ENCODE measurements at regions of chr1 and their contacts with region 1.

Region 1: DNA sequence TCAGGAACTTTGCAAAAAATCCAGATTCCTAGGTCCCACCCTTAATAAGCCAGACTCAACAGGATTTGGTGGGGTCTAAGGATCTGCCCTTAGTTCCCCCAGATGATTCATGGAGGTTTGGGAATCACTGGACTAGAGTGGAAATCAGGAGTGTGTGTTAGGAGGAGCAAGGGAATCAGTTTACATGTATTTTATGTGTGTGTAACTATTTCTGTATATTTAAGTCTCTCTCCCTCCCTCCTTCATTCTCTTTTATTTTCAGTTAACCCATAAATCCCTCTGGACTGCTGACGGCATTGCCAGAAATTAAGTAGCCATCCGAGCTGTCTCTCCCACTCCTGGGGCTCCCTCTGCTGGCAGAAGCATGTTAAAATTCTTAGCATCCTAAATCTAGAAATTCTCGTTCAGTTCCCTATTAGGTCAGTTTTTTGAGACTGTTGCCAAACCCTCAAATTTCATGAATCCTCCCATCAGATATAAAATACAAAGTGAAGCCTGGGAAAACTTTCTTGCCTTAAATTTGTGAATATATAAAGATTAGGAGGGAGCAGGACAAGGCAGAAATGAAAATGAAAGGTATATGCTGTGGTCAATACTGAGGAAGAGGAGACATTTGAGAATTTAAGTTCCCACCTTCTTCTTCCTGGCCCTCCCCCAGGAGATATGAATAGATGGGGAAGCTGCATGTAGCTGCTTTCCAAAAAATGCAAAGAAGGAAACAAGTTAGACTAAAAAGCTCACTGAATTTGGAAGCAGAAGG is 11.7 kb upstream of the HSD11B1 start:
- DNase-seq: peak; percentile 97
- ATAC-seq: peak; percentile 81
- H3K4me3 ChIP-seq: no peak overlapping the region
- H3K27ac ChIP-seq: peak overlapping the region; percentile 34
- H3K4me1 ChIP-seq: peaks cover 38% of the 10 kb centered on the region
- H3K27me3 ChIP-seq: no peaks in the 10 kb centered on the region
- CTCF ChIP-seq: peak; percentile 99

Region 2: DNA sequence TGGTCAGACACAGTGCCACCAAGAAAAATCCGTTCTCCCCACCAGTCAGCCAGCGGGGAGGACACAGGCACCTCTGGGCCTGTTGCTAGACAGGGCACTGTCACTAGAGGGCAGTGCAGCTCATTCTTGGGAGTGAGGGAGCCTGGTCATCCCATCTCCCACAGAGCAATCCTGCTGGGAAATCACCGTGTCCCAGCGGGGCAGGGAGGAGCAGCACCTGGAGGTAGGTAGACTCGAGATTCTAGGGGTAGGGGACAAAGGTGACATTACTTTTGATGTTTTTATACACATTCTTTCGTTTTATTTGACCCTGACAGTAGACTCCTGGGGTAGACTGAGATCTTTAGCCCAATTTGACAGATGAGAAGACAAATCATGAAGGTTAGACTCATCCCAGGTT is 116.1 kb before region 1 on chr1:
- CTCF ChIA-PET with region 1: no interaction called
- POLR2A ChIA-PET with region 1: no interaction called
- intact Hi-C with region 1: loop called (anchors 1 kb)
- DNase-seq: peak; percentile 98
- ATAC-seq: peak; percentile 99
- H3K4me3 ChIP-seq: no peak overlapping the region
- H3K27ac ChIP-seq: no peak overlapping the region
- H3K4me1 ChIP-seq: peaks cover 12% of the 10 kb centered on the region
- H3K27me3 ChIP-seq: no peaks in the 10 kb centered on the region
- CTCF ChIP-seq: peak; percentile 99

Region 3: GRCh38 chr1:209617047-209617673 is 75.8 kb before region 1 on chr1:
- CTCF ChIA-PET with region 1: no interaction called
- POLR2A ChIA-PET with region 1: no interaction called
- intact Hi-C with region 1: no loop called
- DNase-seq: no peak
- ATAC-seq: no peak
- H3K4me3 ChIP-seq: no peak overlapping the region
- H3K27ac ChIP-seq: no peak overlapping the region
- H3K4me1 ChIP-seq: no peaks in the 10 kb centered on the region
- H3K27me3 ChIP-seq: no peaks in the 10 kb centered on the region
- CTCF ChIP-seq: no peak

Region 4: GRCh38 chr1:209627732-209628196 is 65.2 kb before region 1 on chr1:
- CTCF ChIA-PET with region 1: no interaction called
- POLR2A ChIA-PET with region 1: no interaction called
- intact Hi-C with region 1: loop called (anchors 1 kb)
- DNase-seq: peak; percentile 88
- ATAC-seq: peak; percentile 72
- H3K4me3 ChIP-seq: no peak overlapping the region
- H3K27ac ChIP-seq: no peak overlapping the region
- H3K4me1 ChIP-seq: no peaks in the 10 kb centered on the region
- H3K27me3 ChIP-seq: no peaks in the 10 kb centered on the region
- CTCF ChIP-seq: peak; percentile 98

Region 5: DNA sequence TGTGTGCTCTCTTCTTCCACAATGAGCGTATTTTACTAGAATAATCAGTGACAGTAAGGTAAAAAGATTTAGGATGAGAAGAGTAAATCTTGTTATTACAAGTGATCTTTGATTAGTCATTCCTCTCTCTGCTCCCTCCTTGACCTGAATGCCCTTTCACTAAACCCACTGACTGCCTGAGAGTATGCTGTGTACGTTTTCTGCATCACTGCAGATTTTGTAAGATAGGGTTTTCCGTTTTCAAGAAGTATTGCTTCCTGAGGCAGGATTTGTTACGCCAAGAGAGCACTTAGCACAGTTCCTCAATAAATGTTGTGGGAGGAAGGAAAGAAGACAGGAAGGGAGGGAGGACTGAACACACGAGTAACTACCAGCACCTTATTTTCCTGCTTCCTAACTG is 33.0 kb before region 1 on chr1:
- CTCF ChIA-PET with region 1: no interaction called
- POLR2A ChIA-PET with region 1: no interaction called
- intact Hi-C with region 1: no loop called
- DNase-seq: peak; percentile 58
- ATAC-seq: peak; percentile 1; the same call in 1 of the 2 replicates
- H3K4me3 ChIP-seq: no peak overlapping the region
- H3K27ac ChIP-seq: peak overlapping the region; percentile 50
- H3K4me1 ChIP-seq: peaks cover 75% of the 10 kb centered on the region
- H3K27me3 ChIP-seq: no peaks in the 10 kb centered on the region
- CTCF ChIP-seq: no peak

Region 6: GRCh38 chr1:209674957-209675564 is 17.9 kb before region 1 on chr1 and contains the start of gene G0S2:
- CTCF ChIA-PET with region 1: interaction called, 5 read pairs
- POLR2A ChIA-PET with region 1: interaction called, 4 read pairs
- intact Hi-C with region 1: loop called (anchors 1 kb)
- DNase-seq: peak; percentile 96
- ATAC-seq: peak; percentile 75
- H3K4me3 ChIP-seq: peak within 1 kb of the TSS; percentile 71
- H3K27ac ChIP-seq: 0 out of 2 replicates have a peak within 1 kb of the TSS, but pooled peaks have one; percentile 0
- H3K4me1 ChIP-seq: peaks cover 55% of the 10 kb centered on the region
- H3K27me3 ChIP-seq: no peaks in the 10 kb centered on the region
- CTCF ChIP-seq: no peak
- total RNA-seq, gene G0S2: 620 and 723 TPM in 2 replicates